ENCODE measurements at regions of chr20 and their contacts with region 1.

Region 1: DNA sequence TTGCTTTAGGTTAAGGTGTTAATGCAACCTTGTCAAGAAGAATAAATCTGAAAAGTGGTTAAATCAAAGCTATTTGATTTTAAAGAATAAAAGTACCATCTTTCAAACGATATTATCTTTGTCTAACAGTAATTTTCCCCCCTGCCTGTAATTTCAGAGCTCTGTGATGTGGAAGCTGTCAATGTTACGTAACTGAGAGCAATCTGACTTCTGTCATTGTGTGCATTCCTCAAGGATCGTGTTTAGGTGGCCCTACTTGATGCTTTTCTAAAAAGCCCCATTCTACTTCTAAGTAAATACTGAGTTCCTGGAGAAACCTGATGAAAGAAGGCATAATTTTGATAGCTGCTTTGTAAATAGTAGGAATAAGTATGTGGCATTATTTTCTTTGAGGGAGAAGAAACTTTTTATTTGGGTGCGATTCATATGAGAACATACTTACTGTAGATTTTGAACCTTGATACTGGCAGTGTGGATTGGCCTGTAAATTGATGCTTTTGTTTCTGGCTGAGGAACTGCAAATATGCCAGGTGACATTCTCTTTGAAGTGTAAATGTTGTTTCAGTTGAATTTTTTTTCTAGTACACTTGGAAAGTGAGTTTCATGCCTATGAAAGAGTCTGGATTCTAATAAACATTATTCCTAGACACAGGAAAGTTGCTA is 529.6 kb upstream of the FLRT3 start:
- DNase-seq: no peak
- H3K4me3 ChIP-seq: no peak overlapping the region
- H3K27ac ChIP-seq: no peak overlapping the region
- H3K4me1 ChIP-seq: no peaks in the 10 kb centered on the region
- H3K27me3 ChIP-seq: no peaks in the 10 kb centered on the region
- CTCF ChIP-seq: no peak
- EP300 ChIP-seq: no peak
- POLR2A ChIP-seq: no peak

Region 2: GRCh38 chr20:14406495-14406894 is 460.5 kb before region 1 on chr20:
- in situ Hi-C with region 1: no loop called
- intact Hi-C with region 1: no loop called
- DNase-seq: no peak
- H3K4me3 ChIP-seq: no peak overlapping the region
- H3K27ac ChIP-seq: no peak overlapping the region
- H3K4me1 ChIP-seq: peaks cover 0 to 4% (median 0%) of the 10 kb centered on the region in 4 donors
- H3K27me3 ChIP-seq: no peaks in the 10 kb centered on the region
- CTCF ChIP-seq: no peak
- EP300 ChIP-seq: no peak
- POLR2A ChIP-seq: no peak

Region 3: DNA sequence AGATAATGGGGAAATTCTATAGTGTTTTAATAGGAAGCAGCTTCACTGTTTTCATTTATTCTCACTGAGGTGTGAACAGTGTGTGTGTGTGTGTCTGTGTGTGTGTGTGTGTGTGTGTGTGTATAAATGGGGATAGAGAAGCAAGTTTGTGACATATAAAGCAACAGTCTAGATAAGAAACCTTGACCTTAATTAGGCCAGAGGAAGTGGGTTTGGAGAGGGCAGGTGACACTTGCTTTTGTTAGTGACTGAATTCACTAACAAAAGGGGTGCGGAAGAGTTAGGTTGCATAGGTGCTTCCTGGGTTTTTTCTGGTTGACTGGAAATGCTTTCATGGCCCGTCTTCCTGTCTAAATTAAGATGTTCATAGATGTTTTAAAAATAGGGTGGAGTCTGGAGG is 13.9 kb before region 1 on chr20:
- in situ Hi-C with region 1: no loop called
- intact Hi-C with region 1: loop called (anchors 1 kb)
- DNase-seq: no peak
- H3K4me3 ChIP-seq: no peak overlapping the region
- H3K27ac ChIP-seq: no peak overlapping the region
- H3K4me1 ChIP-seq: peaks cover 0 to 3% (median 0%) of the 10 kb centered on the region in 4 donors
- H3K27me3 ChIP-seq: no peaks in the 10 kb centered on the region
- CTCF ChIP-seq: no peak
- EP300 ChIP-seq: no peak
- POLR2A ChIP-seq: no peak

Region 4: GRCh38 chr20:14919480-14920440 is 52.8 kb after region 1 on chr20:
- in situ Hi-C with region 1: no loop called
- intact Hi-C with region 1: no loop called
- DNase-seq: peak; percentile 19
- H3K4me3 ChIP-seq: no peak overlapping the region
- H3K27ac ChIP-seq: no peak overlapping the region
- H3K4me1 ChIP-seq: peaks cover 0 to 12% (median 3%) of the 10 kb centered on the region in 4 donors
- H3K27me3 ChIP-seq: no peaks in the 10 kb centered on the region
- CTCF ChIP-seq: no peak
- EP300 ChIP-seq: no peak
- POLR2A ChIP-seq: no peak

Measured in transverse colon (tissue), 4 donors.